Calu3 (cell line): ENCODE measurements at regions of chr4 and their contacts with region 1.

Region 1: GRCh38 chr4:113411496-113411938 is 350.0 kb downstream of the CAMK2D start:
- DNase-seq: peak; percentile 31
- H3K4me3 Mint-ChIP-seq: no peak overlapping the region
- H3K27ac Mint-ChIP-seq: peak overlapping the region; percentile 31
- H3K4me1 Mint-ChIP-seq: no peaks in the 10 kb centered on the region
- H3K27me3 Mint-ChIP-seq: no peaks in the 10 kb centered on the region
- CTCF ChIP-seq: no peak

Region 2: DNA sequence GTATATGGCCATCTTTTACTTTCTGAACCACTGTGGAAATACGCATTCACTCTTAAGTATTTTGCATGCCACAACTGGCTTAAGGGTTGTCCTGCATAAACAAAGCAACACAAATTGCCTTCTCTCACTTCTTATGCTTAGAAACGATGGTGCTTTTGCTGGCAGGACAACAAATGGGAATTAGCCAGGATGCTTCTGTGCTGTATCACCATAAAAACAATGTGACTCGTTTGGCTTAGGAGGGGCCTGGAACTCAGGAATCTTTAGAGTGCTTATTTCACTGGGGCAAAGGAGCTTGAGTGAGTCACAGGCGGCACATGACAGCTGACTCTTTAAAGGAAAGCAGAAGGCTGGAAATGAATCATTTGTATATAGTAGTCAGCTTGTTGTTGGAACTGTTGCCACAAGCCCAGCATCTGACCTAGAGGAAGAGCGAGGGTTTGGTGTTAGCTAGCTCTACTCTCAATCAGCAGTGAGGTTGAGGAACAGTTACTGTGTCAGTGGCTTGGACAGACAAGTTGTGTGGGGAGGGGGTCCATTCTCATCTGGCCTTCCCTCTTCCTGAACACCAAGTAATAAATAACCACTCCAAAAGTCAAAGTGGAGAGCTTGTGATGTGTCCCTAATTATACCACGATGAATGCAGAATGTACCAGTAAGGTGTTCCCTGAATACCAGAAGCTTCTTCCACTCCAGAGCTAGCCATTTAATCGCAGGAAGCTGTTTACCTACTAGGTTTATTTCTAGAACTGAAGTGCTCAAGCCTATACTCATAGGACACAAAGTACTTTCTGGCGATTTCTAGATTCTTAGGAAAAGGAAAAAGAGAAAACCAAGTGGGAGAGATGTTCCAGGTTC is 56.9 kb after region 1 on chr4:
- CTCF ChIA-PET with region 1: interaction called, 6 read pairs
- intact Hi-C with region 1: loop called (anchors 10 kb)
- DNase-seq: peak; percentile 61
- H3K4me3 Mint-ChIP-seq: peak overlapping the region; percentile 50
- H3K27ac Mint-ChIP-seq: peak overlapping the region; percentile 56
- H3K4me1 Mint-ChIP-seq: peaks cover 37% of the 10 kb centered on the region
- H3K27me3 Mint-ChIP-seq: no peaks in the 10 kb centered on the region
- CTCF ChIP-seq: no peak

Region 3: DNA sequence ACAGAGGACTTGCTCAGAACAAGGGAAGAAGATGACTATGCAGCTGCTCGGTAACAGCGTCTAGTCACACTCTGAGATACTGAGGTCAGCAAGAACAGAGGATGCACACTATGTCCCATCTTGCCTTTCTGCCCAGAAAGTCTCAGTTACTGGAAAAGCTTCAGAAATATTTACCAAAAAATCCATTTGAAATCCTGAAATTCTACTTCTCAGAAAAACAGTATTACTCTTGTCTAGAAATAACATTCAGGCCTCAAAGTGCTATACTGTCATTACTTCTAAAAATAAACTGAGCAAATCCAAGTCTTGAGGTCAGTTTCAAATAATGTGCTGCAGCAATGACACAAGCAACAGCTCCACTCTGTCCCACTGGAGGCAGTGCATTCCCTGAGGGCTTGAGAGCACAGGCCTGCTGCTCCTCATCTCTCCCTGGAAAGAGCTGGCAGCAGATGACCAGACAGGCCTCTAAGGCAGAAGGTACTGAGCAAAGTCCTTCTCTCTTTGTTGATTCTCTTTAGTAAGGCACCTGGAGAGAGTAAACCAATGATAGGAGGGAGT is 273.1 kb after region 1 on chr4:
- CTCF ChIA-PET with region 1: no interaction called
- intact Hi-C with region 1: no loop called
- DNase-seq: no peak
- H3K4me3 Mint-ChIP-seq: no peak overlapping the region
- H3K27ac Mint-ChIP-seq: no peak overlapping the region
- H3K4me1 Mint-ChIP-seq: no peaks in the 10 kb centered on the region
- H3K27me3 Mint-ChIP-seq: no peaks in the 10 kb centered on the region
- CTCF ChIP-seq: no peak

Region 4: GRCh38 chr4:113761620-113762185 is 350.2 kb after region 1 on chr4 and contains the start of gene CAMK2D:
- CTCF ChIA-PET with region 1: no interaction called
- intact Hi-C with region 1: loop called (anchors 5 kb)
- DNase-seq: peak; percentile 79
- H3K4me3 Mint-ChIP-seq: peak within 1 kb of the TSS; percentile 93
- H3K27ac Mint-ChIP-seq: peak within 1 kb of the TSS; percentile 99
- H3K4me1 Mint-ChIP-seq: peaks cover 30% of the 10 kb centered on the region
- H3K27me3 Mint-ChIP-seq: no peaks in the 10 kb centered on the region
- CTCF ChIP-seq: no peak
- total RNA-seq, gene CAMK2D: 22.1 and 28.3 TPM in 2 replicates